CD14-positive monocyte (primary cell): ENCODE measurements at regions of chrX and their contacts with region 1.

Region 1: GRCh38 chrX:148043456-148043855 is 62.3 kb downstream of the FMR1NB start:
- DNase-seq: peak; percentile 1 to 37 (median 2)
- H3K4me3 ChIP-seq: no peak overlapping the region
- H3K4me3 Mint-ChIP-seq: no peak overlapping the region
- H3K27ac ChIP-seq: no peak overlapping the region
- H3K27ac Mint-ChIP-seq: no peak overlapping the region
- H3K4me1 ChIP-seq: no peaks in the 10 kb centered on the region
- H3K4me1 Mint-ChIP-seq: peaks cover 4% of the 10 kb centered on the region
- H3K27me3 ChIP-seq: no peaks in the 10 kb centered on the region
- H3K27me3 Mint-ChIP-seq: peaks cover 0 to 3% (median 2%) of the 10 kb centered on the region in 3 donors
- CTCF ChIP-seq: no peak

Region 2: GRCh38 chrX:148905400-148905799 is 861.9 kb after region 1 on chrX:
- intact Hi-C with region 1: no loop called
- DNase-seq: no peak
- H3K4me3 ChIP-seq: no peak overlapping the region
- H3K4me3 Mint-ChIP-seq: no peak overlapping the region
- H3K27ac ChIP-seq: no peak overlapping the region
- H3K27ac Mint-ChIP-seq: peak overlapping the region in 1 of 7 donors; percentile 22
- H3K4me1 ChIP-seq: no peaks in the 10 kb centered on the region
- H3K4me1 Mint-ChIP-seq: peaks cover 6% of the 10 kb centered on the region
- H3K27me3 ChIP-seq: no peaks in the 10 kb centered on the region
- H3K27me3 Mint-ChIP-seq: no peaks in the 10 kb centered on the region
- CTCF ChIP-seq: no peak

Region 3: GRCh38 chrX:149470955-149471354 is 1427.5 kb after region 1 on chrX:
- intact Hi-C with region 1: loop called in 1 of 2 experiments (anchors 5 kb)
- DNase-seq: peak; percentile 27 to 49 (median 42)
- H3K4me3 ChIP-seq: no peak overlapping the region
- H3K4me3 Mint-ChIP-seq: no peak overlapping the region
- H3K27ac ChIP-seq: no peak overlapping the region
- H3K27ac Mint-ChIP-seq: no peak overlapping the region
- H3K4me1 ChIP-seq: no peaks in the 10 kb centered on the region
- H3K4me1 Mint-ChIP-seq: peaks cover 2% of the 10 kb centered on the region
- H3K27me3 ChIP-seq: no peaks in the 10 kb centered on the region
- H3K27me3 Mint-ChIP-seq: peaks cover 0 to 12% (median 6%) of the 10 kb centered on the region in 3 donors
- CTCF ChIP-seq: peak; percentile 75